ENCODE measurements at regions of chr15 and their contacts with region 1.

Region 1: GRCh38 chr15:62254137-62254934 is 89.3 kb upstream of the C2CD4B start:
- DNase-seq: peak; percentile 61 to 82 (median 67)
- ATAC-seq: peak in 3 of 4 donors; percentile 49 to 79 (median 50)
- H3K4me3 ChIP-seq: no peak overlapping the region
- H3K27ac ChIP-seq: no peak overlapping the region
- H3K4me1 ChIP-seq: no peaks in the 10 kb centered on the region
- H3K27me3 ChIP-seq: no peaks in the 10 kb centered on the region
- CTCF ChIP-seq: peak; percentile 56 to 81 (median 72)
- POLR2A ChIP-seq: no peak

Region 2: GRCh38 chr15:61871926-61872522 is 382.3 kb before region 1 on chr15:
- intact Hi-C with region 1: loop called in 1 of 10 experiments (anchors 10 kb)
- DNase-seq: no peak
- ATAC-seq: no peak
- H3K4me3 ChIP-seq: no peak overlapping the region
- H3K27ac ChIP-seq: no peak overlapping the region
- H3K4me1 ChIP-seq: no peaks in the 10 kb centered on the region
- H3K27me3 ChIP-seq: no peaks in the 10 kb centered on the region
- CTCF ChIP-seq: peak; percentile 35 to 67 (median 50)
- POLR2A ChIP-seq: no peak

Region 3: DNA sequence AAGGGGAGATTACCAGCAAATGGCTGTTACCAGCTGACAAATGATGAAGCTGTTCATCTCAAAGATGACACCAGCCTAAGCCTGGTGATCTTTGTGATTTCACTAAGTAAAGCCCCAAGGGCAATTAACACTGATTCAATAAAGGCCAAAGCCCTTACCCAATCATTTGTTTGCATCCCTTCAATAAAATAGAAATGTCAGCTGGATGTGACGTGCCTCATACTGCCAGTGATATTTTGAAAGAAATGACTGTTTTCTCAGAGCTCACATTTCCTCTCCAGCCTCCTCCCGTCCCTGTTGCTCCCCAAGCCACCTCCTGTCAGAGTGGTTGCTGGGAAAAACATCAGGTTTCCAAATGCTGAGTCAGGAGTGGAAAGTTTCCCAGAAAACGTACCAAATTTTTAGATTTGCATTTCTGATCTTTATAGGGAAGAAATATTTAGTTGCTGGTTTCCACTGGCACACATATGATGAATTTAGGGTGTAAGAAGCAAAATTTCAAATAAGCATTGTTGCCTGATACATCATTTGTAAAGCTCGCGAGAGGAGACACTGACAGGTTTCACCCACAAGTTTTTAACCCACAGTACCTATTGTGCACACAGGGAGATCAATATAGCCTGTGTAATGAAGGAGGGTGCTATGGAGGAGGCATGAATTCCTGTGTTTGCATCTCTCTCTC is 166.5 kb before region 1 on chr15:
- intact Hi-C with region 1: loop called in 1 of 10 experiments (anchors 10 kb)
- DNase-seq: no peak
- ATAC-seq: peak in 3 of 4 donors; percentile 48 to 68 (median 59)
- H3K4me3 ChIP-seq: no peak overlapping the region
- H3K27ac ChIP-seq: peak overlapping the region in 2 of 12 donors; percentile 1 to 30
- H3K4me1 ChIP-seq: peaks cover 0 to 10% (median 3%) of the 10 kb centered on the region in 12 donors
- H3K27me3 ChIP-seq: no peaks in the 10 kb centered on the region
- CTCF ChIP-seq: no peak
- POLR2A ChIP-seq: no peak

Region 4: DNA sequence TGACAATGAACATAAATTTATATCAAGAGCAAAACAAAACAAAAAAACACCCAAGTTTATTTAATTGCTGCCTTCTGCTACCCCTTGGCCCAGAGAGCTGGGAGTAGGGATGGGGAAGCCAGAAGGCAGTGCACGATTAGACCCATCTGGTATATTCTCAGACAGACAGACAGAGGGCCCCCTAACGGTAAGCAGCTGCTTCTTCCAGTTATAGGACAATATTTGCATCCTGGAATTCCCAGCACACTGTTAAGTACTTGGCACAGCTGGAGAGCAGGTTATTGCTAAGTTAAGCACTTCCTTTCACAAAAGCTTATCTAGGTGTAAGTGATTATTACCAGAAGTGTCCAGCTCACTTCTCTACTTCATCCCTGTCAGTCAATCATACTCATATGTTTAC is 128.6 kb before region 1 on chr15:
- intact Hi-C with region 1: loop called in 3 of 10 experiments (anchors 2 to 10 kb)
- DNase-seq: peak in 2 of 5 donors; percentile 29 to 32
- ATAC-seq: peak in 3 of 4 donors; percentile 59 to 72 (median 65)
- H3K4me3 ChIP-seq: no peak overlapping the region
- H3K27ac ChIP-seq: peak overlapping the region in 1 of 12 donors; percentile 53
- H3K4me1 ChIP-seq: peaks cover 0 to 39% (median 1%) of the 10 kb centered on the region in 12 donors
- H3K27me3 ChIP-seq: no peaks in the 10 kb centered on the region
- CTCF ChIP-seq: peak; percentile 40 to 62 (median 48)
- POLR2A ChIP-seq: no peak

Region 5: DNA sequence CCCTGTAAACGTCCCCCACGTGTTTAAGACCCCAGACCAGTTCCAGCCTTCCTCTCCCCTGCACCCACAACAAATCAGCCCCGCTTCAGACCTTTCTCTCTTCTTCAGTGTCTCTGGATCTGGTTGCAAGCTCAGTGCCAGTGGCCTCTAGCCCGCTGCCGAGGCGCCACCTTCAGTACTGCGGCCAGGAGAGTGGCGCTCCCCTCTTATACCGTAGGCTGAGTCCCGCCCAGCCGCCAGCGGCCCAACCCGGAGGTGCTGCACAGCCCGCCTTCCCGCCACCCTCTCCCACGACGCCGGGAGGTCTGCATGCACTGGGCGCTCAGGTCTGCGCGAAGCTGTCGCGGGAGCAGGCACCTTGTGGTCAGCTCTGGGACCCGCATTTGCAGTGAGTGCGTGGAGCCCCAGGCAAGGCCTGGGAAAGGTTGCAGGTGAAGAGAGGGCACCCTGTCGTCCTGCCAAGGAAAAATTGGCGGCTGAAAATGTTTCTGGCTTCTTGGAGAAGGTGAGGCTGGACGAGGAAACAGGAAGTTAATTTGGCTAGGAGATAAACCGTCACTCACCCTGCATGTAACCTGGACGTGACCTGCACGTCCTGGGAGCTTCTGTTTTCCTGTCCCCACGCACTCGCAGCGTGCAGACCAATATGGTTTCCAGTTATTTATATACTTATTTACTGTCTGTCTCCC is 89.1 kb before region 1 on chr15 and contains the start of gene C2CD4B:
- intact Hi-C with region 1: loop called in 2 of 10 experiments (anchors 2 to 10 kb)
- DNase-seq: peak; percentile 71 to 86 (median 79)
- ATAC-seq: peak; percentile 90 to 97 (median 92)
- H3K4me3 ChIP-seq: peak within 1 kb of the TSS; percentile 41 to 73 (median 57)
- H3K27ac ChIP-seq: peak within 1 kb of the TSS; percentile 61 to 83 (median 78)
- H3K4me1 ChIP-seq: peaks cover 0 to 23% (median 8%) of the 10 kb centered on the region in 12 donors
- H3K27me3 ChIP-seq: peaks cover 0 to 51% (median 28%) of the 10 kb centered on the region in 9 donors
- CTCF ChIP-seq: no peak
- POLR2A ChIP-seq: peak in 1 of 2 donors; percentile 90
- total RNA-seq, gene C2CD4B: 0.65 to 8.4 (median 2.3) TPM

Region 6: GRCh38 chr15:62219799-62220198 is 34.5 kb before region 1 on chr15:
- intact Hi-C with region 1: no loop called
- DNase-seq: no peak
- ATAC-seq: no peak
- H3K4me3 ChIP-seq: no peak overlapping the region
- H3K27ac ChIP-seq: no peak overlapping the region
- H3K4me1 ChIP-seq: no peaks in the 10 kb centered on the region
- H3K27me3 ChIP-seq: peaks cover 0 to 7% (median 0%) of the 10 kb centered on the region in 9 donors
- CTCF ChIP-seq: no peak
- POLR2A ChIP-seq: no peak